CD8-positive, alpha-beta T cell (primary cell): ENCODE measurements at regions of chr1 and their contacts with region 1.

Region 1: GRCh38 chr1:62076286-62076685 is 118.4 kb upstream of the L1TD1 start:
- DNase-seq: no peak
- ATAC-seq: no peak
- H3K4me3 ChIP-seq: no peak overlapping the region
- H3K4me3 Mint-ChIP-seq: no peak overlapping the region
- H3K27ac ChIP-seq: no peak overlapping the region
- H3K27ac Mint-ChIP-seq: no peak overlapping the region
- H3K4me1 ChIP-seq: no peaks in the 10 kb centered on the region
- H3K4me1 Mint-ChIP-seq: no peaks in the 10 kb centered on the region
- H3K27me3 ChIP-seq: no peaks in the 10 kb centered on the region
- H3K27me3 Mint-ChIP-seq: no peaks in the 10 kb centered on the region
- CTCF ChIP-seq: no peak

Region 2: DNA sequence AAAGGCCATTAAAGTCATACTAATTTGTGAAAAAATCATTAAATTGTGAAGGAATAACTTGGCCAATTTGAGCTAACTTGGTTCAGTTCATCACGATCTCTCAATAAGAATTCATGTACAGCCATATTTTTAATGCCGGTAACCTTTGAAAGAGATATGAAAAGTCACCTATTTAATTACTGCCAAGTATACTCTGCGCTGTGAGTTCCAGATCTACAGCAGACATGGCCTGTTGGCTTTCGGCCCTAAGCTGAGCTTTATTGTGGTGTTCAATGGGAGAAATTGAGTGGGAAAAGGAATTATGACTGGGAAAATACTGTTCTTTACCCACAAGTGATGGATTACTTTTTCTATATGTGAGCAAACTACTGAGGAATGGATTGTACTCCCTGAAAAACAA is 41.5 kb before region 1 on chr1:
- CTCF ChIA-PET with region 1: no interaction called
- POLR2A ChIA-PET with region 1: no interaction called
- intact Hi-C with region 1: loop called in 1 of 2 experiments (anchors 1 kb)
- DNase-seq: no peak
- ATAC-seq: no peak
- H3K4me3 ChIP-seq: no peak overlapping the region
- H3K4me3 Mint-ChIP-seq: no peak overlapping the region
- H3K27ac ChIP-seq: no peak overlapping the region
- H3K27ac Mint-ChIP-seq: no peak overlapping the region
- H3K4me1 ChIP-seq: no peaks in the 10 kb centered on the region
- H3K4me1 Mint-ChIP-seq: no peaks in the 10 kb centered on the region
- H3K27me3 ChIP-seq: no peaks in the 10 kb centered on the region
- H3K27me3 Mint-ChIP-seq: no peaks in the 10 kb centered on the region
- CTCF ChIP-seq: no peak

Region 3: GRCh38 chr1:62209931-62210595 is 133.8 kb after region 1 on chr1:
- CTCF ChIA-PET with region 1: no interaction called
- POLR2A ChIA-PET with region 1: no interaction called
- intact Hi-C with region 1: no loop called
- DNase-seq: no peak
- ATAC-seq: no peak
- H3K4me3 ChIP-seq: no peak overlapping the region
- H3K4me3 Mint-ChIP-seq: no peak overlapping the region
- H3K27ac ChIP-seq: no peak overlapping the region
- H3K27ac Mint-ChIP-seq: no peak overlapping the region
- H3K4me1 ChIP-seq: no peaks in the 10 kb centered on the region
- H3K4me1 Mint-ChIP-seq: no peaks in the 10 kb centered on the region
- H3K27me3 ChIP-seq: no peaks in the 10 kb centered on the region
- H3K27me3 Mint-ChIP-seq: no peaks in the 10 kb centered on the region
- CTCF ChIP-seq: no peak

Region 4: DNA sequence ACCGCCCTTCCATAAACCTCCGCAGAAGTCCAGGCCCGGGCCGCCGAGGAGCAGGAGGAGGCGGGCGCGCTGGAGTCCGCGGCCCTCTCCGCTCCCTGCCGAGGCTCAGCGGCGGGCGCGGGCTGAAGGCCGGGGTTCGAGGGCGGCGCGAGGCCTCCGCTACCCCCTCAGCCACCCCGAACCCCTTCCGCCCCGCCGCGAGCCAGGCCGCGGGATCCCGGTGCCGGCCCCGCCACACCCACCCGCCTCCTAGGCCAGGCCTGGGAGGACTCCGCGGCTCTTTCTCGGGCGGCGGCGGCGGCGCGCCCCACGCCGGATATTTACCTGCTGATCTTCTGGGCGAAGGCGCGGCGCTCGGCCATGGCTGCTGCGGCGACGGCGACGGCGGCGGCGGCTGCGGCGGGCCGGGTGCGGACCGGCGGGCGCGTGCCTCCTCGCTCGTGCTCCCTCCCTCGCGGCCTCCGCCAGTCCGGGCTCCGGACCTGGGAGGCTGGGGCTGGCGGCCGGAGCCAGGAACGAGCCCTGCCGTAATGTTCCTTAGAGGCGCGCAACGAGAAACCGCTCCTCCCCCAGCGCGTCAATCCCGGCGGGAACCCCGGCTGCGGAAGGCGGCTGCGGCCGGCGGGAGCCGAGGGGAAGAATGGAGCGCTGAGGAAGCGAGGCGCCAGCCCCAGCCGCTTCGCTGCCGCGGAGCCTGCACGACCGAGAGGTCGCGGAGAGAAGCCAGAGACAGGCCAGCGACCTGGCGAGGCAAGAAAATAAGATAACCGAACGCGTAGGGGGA is 611.8 kb after region 1 on chr1 and contains the start of gene DOCK7:
- CTCF ChIA-PET with region 1: no interaction called
- POLR2A ChIA-PET with region 1: no interaction called
- intact Hi-C with region 1: no loop called
- DNase-seq: peak; percentile 11 to 76 (median 50)
- ATAC-seq: peak; percentile 63
- H3K4me3 ChIP-seq: peak within 1 kb of the TSS; percentile 60 to 71
- H3K4me3 Mint-ChIP-seq: peak within 1 kb of the TSS; percentile 98
- H3K27ac ChIP-seq: peak within 1 kb of the TSS; percentile 26 to 36
- H3K27ac Mint-ChIP-seq: peak within 1 kb of the TSS; percentile 94
- H3K4me1 ChIP-seq: no peaks in the 10 kb centered on the region
- H3K4me1 Mint-ChIP-seq: peaks cover 28% of the 10 kb centered on the region
- H3K27me3 ChIP-seq: no peaks in the 10 kb centered on the region
- H3K27me3 Mint-ChIP-seq: peaks cover 6% of the 10 kb centered on the region
- CTCF ChIP-seq: no peak
- total RNA-seq, gene DOCK7: 3.9 to 7.4 TPM